HEK293 (cell line): ENCODE measurements at regions of chr19 and their contacts with region 1.

Region 1: GRCh38 chr19:29858000-29858596 is 46.3 kb downstream of the CCNE1 start:
- H3K4me3 ChIP-seq: no peak overlapping the region
- H3K27ac ChIP-seq: no peak overlapping the region
- H3K4me1 ChIP-seq: peaks cover 10% of the 10 kb centered on the region
- CTCF ChIP-seq: peak; percentile 86

Region 2: DNA sequence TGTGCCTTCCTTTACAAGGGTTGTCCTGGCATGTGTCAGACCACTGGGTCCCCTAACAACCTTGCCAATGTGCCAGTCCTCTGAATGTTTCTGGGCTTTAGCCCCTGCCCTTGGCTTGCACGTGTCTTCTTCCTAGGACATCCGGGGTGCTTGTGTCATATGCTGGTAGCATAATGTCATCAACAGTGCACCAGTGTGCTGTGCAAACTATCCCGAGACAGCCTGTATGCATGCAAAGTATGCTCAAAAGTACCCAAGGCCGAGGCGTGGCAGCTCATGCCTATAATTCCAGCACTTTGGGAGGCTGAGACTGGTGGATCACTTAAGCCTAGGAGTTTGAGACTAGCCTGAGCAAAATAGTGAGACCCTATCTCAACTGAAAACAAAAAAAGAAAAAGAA is 122.3 kb before region 1 on chr19:
- CTCF ChIA-PET with region 1: interaction called, 29 read pairs
- POLR2A ChIA-PET with region 1: no interaction called
- H3K4me3 ChIP-seq: no peak overlapping the region
- H3K27ac ChIP-seq: no peak overlapping the region
- H3K4me1 ChIP-seq: no peaks in the 10 kb centered on the region
- CTCF ChIP-seq: no peak